Activated CD8-positive, alpha-beta T cell treated with anti-CD3 and anti-CD28 coated beads, Interleukin-2, amount 10 ng/mL, durations not matched to agents 7 days and 5 days (primary cell): ENCODE measurements at regions of chr13 and their contacts with region 1.

Region 1: GRCh38 chr13:41456768-41457588 is at the start of gene RGCC:
- DNase-seq: peak; percentile 81
- ATAC-seq: peak; percentile 72
- H3K4me3 Mint-ChIP-seq: peak within 1 kb of the TSS; percentile 75
- H3K27ac Mint-ChIP-seq: peak within 1 kb of the TSS; percentile 74
- H3K4me1 Mint-ChIP-seq: peaks cover 36% of the 10 kb centered on the region
- H3K27me3 Mint-ChIP-seq: peaks cover 18% of the 10 kb centered on the region
- total RNA-seq, gene RGCC: 23.8 to 23.9 TPM

Region 2: GRCh38 chr13:41326661-41327060 is 130.3 kb before region 1 on chr13:
- CTCF ChIA-PET with region 1: no interaction called
- POLR2A ChIA-PET with region 1: no interaction called
- DNase-seq: no peak
- ATAC-seq: no peak
- H3K4me3 Mint-ChIP-seq: no peak overlapping the region
- H3K27ac Mint-ChIP-seq: peak overlapping the region; percentile 60
- H3K4me1 Mint-ChIP-seq: peaks cover 34% of the 10 kb centered on the region
- H3K27me3 Mint-ChIP-seq: no peaks in the 10 kb centered on the region

Region 3: DNA sequence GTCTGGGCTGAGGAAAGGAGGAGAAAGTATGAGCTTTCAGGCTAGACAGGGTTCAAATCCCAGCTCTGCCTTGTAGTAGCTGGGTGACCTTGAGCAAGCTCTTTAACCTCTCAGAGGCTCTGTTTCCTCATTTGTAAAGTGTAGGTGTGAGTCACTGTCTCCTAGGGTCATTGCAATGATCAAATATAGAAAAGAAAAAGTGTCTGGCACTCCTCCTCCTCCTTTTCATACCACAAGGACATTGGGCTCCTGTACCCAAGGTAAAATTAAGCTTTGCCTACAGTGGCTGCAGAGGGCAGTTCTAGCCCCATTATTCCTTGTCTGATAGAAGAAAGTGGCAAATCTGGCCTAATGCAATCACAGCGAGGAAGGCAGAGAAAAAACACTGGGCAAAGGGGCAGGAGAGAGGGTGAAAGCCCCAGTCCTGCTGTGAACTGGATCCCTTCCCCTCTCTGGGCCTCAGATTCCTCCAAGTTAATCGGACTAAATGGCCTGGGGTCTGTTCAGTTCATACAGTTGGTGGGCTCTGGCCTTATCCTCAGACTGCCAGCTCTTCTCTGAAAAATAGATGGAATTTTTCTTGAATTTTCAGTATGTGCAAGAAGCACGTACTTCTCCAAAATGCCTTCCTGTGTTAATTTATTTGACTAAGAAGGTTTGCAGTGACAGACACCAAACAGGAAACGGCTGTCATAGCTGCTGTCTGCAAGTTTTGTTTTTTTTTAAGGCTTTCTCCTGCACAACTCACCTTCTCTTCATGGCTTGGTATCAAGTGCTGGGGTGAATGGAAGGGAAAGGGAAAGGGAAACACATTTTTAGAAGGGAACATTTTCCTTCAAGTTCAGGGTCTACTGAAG is 35.7 kb after region 1 on chr13:
- CTCF ChIA-PET with region 1: interaction called, 59 read pairs
- POLR2A ChIA-PET with region 1: interaction called, 9 read pairs
- DNase-seq: peak; percentile 44
- ATAC-seq: peak; percentile 74
- H3K4me3 Mint-ChIP-seq: peak overlapping the region; percentile 34
- H3K27ac Mint-ChIP-seq: peak overlapping the region; percentile 96
- H3K4me1 Mint-ChIP-seq: peaks cover 60% of the 10 kb centered on the region
- H3K27me3 Mint-ChIP-seq: no peaks in the 10 kb centered on the region

Region 4: GRCh38 chr13:41502673-41503072 is 45.7 kb after region 1 on chr13:
- CTCF ChIA-PET with region 1: interaction called, 59 read pairs
- POLR2A ChIA-PET with region 1: interaction called, 3 read pairs
- DNase-seq: no peak
- ATAC-seq: no peak
- H3K4me3 Mint-ChIP-seq: no peak overlapping the region
- H3K27ac Mint-ChIP-seq: no peak overlapping the region
- H3K4me1 Mint-ChIP-seq: peaks cover 28% of the 10 kb centered on the region
- H3K27me3 Mint-ChIP-seq: no peaks in the 10 kb centered on the region

Region 5: GRCh38 chr13:41554626-41555386 is 97.8 kb after region 1 on chr13:
- CTCF ChIA-PET with region 1: interaction called, 17 read pairs
- POLR2A ChIA-PET with region 1: no interaction called
- DNase-seq: peak; percentile 29
- ATAC-seq: peak; percentile 57
- H3K4me3 Mint-ChIP-seq: no peak overlapping the region
- H3K27ac Mint-ChIP-seq: no peak overlapping the region
- H3K4me1 Mint-ChIP-seq: peaks cover 9% of the 10 kb centered on the region
- H3K27me3 Mint-ChIP-seq: no peaks in the 10 kb centered on the region

Region 6: DNA sequence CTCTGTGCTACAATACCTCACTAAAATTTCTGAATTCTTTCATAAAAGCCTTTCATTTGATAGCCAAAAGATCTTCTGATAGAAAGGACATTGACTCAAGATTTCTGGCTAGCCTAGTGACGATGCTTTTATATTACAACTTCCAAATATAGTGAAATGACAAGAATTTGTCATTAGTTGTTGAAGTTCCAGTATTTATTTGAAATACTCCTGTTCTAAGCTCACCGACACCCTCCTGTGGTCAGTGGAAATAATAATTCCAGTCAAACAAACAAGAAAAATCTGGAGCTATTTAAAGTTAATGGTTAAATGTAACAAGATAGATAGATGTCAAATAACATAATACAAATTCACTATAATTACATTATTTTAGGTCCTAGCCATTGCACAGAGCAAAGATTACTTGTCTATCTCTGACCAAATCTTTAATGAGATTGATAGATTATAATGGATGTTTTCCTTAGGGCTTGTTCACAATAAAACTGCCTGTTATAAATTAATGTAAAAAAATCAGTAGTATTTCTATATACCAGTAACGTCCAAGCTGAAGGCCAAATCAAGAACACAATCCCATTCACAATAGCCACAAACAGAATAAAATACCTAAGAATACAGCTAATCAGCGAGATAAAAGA is 195.9 kb after region 1 on chr13:
- CTCF ChIA-PET with region 1: interaction called, 104 read pairs
- POLR2A ChIA-PET with region 1: interaction called, 3 read pairs
- DNase-seq: peak; percentile 52
- ATAC-seq: no peak
- H3K4me3 Mint-ChIP-seq: no peak overlapping the region
- H3K27ac Mint-ChIP-seq: no peak overlapping the region
- H3K4me1 Mint-ChIP-seq: peaks cover 3% of the 10 kb centered on the region
- H3K27me3 Mint-ChIP-seq: no peaks in the 10 kb centered on the region